ENCODE measurements at regions of chr1 and their contacts with region 1.

Region 1: DNA sequence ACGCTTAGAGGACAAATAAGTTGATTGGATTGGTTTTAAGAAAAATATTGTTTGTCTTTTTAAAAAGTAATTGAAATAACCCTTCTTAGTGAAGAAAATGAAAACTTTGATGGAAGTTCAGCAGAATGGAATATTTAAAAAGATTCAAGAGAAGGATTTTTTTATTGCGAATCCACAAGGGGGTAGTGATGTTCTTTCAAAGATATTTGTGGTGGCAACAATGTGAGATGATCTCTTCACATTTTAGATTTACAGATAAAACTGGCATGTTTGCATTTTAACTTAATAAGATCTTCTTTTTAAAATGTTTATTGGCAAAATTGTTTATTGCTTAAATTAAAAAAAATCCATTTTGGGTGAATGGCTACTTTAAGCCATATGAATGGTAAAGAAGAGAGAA is 8.9 kb downstream of the CAMTA1 start:
- DNase-seq: no peak
- ATAC-seq: no peak

Region 2: DNA sequence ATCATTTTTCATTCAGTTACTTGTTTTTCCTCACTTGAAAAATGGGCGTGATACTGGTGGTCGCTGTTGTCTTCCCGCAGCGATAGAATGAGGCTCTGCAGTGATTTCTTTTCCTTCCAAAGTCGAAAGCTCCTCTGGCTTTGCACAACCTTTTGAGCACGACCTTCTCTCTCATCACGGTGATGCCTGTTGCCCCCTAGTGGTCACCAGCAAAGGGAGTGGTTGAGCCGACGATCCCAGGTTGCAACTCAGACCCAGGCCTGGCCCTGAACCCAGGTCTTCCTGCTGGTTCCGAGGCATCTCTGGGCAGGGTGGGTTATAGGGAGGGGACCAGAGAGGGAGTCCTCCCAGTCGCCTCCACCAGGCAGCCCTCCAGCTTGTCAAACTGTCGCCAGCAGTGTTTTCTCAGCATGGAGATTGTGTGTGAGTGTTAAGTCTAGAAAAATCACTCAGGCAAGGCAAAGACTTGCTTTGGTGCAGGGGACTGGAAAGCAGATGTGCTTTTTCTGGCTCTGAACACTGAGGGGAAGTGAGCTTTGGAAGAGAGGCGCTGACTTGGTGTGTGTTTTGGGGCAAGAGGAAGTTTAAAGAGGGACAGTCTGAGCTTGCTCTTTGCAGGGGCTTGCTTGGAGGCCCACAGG is 276.3 kb after region 1 on chr1:
- intact Hi-C with region 1: loop called (anchors 5 kb)
- DNase-seq: peak; percentile 53
- ATAC-seq: peak; percentile 85

Region 3: DNA sequence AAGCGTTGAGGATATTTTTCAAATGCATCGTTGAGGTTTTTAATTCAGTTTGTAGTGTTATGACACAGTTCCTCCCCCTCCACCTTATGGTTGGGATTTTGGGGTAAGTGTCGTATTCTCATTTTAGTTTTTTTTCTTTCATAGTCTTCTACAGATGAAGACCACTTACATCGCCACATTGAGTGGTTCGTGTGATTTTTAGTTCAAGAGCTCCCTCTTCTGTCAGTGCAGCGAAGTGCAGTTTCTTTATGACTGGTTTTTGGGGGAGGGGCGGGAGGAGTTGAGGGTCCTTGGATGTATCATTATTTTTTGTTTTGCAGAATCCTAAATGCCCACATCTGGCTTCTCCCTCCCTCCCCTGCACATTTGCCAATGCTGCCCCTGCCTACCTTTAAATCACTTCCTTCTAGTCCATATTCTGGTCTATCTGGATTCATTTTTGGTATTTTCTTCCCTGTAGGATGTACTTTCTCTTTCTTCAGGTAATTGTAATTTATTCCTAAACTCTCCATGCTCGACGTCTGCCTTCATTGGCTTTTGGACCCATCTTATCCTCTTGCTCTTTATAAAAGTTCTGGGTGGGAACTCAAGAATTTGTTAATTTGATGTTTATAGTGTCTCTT is 424.2 kb after region 1 on chr1:
- intact Hi-C with region 1: loop called (anchors 10 kb)
- DNase-seq: no peak
- ATAC-seq: no peak

Measured in left ventricle myocardium superior (tissue), 1 donor.